B cell (primary cell): ENCODE measurements at regions of chr4 and their contacts with region 1.

Region 1: DNA sequence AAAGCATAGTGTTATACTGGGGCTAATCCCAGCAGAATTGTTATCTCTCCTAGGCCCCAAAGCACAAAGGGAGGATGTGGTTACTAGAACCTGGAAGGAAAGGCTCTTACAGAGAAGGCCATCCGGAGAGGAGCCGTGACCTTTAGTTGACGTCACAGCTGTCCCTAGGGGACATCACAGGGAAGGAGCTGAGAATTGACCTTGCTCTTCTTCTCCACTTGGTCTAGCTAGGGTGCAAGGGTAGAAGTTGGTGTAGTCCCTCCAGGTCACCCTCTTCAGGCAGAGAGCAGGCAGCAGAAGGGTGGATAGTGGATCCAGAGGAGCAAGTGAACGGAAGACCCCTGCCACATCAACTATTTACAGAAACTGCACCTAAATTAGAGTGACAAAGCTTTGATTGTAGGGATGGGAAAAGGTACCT is 22.8 kb upstream of the FGF2 start:
- DNase-seq: peak; percentile 5
- ATAC-seq: no peak
- H3K4me3 ChIP-seq: no peak overlapping the region
- H3K4me3 Mint-ChIP-seq: no peak overlapping the region
- H3K27ac ChIP-seq: no peak overlapping the region
- H3K27ac Mint-ChIP-seq: no peak overlapping the region
- H3K4me1 ChIP-seq: no peaks in the 10 kb centered on the region
- H3K4me1 Mint-ChIP-seq: no peaks in the 10 kb centered on the region
- H3K27me3 ChIP-seq: peaks cover 0 to 2% (median 0%) of the 10 kb centered on the region in 4 experiments
- H3K27me3 Mint-ChIP-seq: peaks cover 8% of the 10 kb centered on the region
- CTCF ChIP-seq: no peak

Region 2: DNA sequence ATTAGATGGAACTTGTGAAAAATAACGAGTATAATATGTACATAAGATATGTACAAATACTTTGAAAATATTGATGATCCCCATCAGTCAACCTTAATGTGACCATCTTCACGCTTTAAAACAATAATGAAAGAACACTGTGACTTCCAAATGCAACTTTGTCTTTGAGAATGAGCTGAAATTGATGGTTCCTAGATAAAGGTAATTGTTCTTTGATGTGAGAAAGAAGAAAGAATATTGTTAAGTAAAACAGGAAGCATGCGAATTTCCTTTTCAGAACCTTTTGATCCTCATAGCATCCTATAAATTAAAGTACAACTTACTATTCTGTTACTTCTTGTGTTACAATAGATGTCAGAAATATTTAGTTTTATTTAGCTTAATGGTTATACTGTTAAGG is 369.5 kb before region 1 on chr4:
- CTCF ChIA-PET with region 1: no interaction called
- POLR2A ChIA-PET with region 1: no interaction called
- intact Hi-C with region 1: no loop called
- DNase-seq: no peak
- ATAC-seq: no peak
- H3K4me3 ChIP-seq: no peak overlapping the region
- H3K4me3 Mint-ChIP-seq: no peak overlapping the region
- H3K27ac ChIP-seq: no peak overlapping the region
- H3K27ac Mint-ChIP-seq: no peak overlapping the region
- H3K4me1 ChIP-seq: no peaks in the 10 kb centered on the region
- H3K4me1 Mint-ChIP-seq: no peaks in the 10 kb centered on the region
- H3K27me3 ChIP-seq: no peaks in the 10 kb centered on the region
- H3K27me3 Mint-ChIP-seq: peaks cover 4% of the 10 kb centered on the region
- CTCF ChIP-seq: no peak

Region 3: DNA sequence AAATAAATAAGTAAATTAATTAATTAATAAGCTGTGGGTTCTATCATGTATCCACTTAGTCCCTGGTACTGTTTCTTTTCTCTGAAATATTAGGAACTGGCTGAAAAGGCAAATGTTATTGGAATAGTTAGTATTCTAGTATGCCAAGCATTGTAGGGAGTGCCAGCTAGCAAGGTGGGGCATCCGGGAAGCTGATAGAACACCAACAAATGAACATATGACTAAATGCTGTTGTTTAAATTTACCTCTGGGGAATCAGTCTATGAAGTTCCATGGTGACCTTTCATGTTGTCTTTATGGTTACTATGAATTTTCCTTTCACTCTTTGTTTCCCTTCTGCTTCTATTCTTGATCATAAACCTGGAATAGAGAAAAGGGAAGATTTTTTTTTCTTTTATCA is 85.9 kb after region 1 on chr4:
- CTCF ChIA-PET with region 1: no interaction called
- POLR2A ChIA-PET with region 1: no interaction called
- intact Hi-C with region 1: loop called (anchors 10 kb)
- DNase-seq: no peak
- ATAC-seq: no peak
- H3K4me3 ChIP-seq: no peak overlapping the region
- H3K4me3 Mint-ChIP-seq: no peak overlapping the region
- H3K27ac ChIP-seq: no peak overlapping the region
- H3K27ac Mint-ChIP-seq: no peak overlapping the region
- H3K4me1 ChIP-seq: no peaks in the 10 kb centered on the region
- H3K4me1 Mint-ChIP-seq: no peaks in the 10 kb centered on the region
- H3K27me3 ChIP-seq: no peaks in the 10 kb centered on the region
- H3K27me3 Mint-ChIP-seq: no peaks in the 10 kb centered on the region
- CTCF ChIP-seq: no peak